Natural killer cell (primary cell): ENCODE measurements at regions of chr3 and their contacts with region 1.

Region 1: GRCh38 chr3:52339612-52340011 is 23.5 kb downstream of the DNAH1 start:
- DNase-seq: peak in 1 of 2 donors; percentile 88
- ATAC-seq: peak; percentile 79 to 82 (median 81)
- H3K4me3 ChIP-seq: no peak overlapping the region
- H3K4me3 Mint-ChIP-seq: no peak overlapping the region
- H3K27ac ChIP-seq: no peak overlapping the region
- H3K27ac Mint-ChIP-seq: peak overlapping the region in 1 of 2 donors; percentile 11
- H3K4me1 ChIP-seq: no peaks in the 10 kb centered on the region
- H3K4me1 Mint-ChIP-seq: peaks cover 7% of the 10 kb centered on the region in 2 donors
- H3K27me3 ChIP-seq: no peaks in the 10 kb centered on the region
- H3K27me3 Mint-ChIP-seq: no peaks in the 10 kb centered on the region
- CTCF ChIP-seq: peak; percentile 84

Region 2: DNA sequence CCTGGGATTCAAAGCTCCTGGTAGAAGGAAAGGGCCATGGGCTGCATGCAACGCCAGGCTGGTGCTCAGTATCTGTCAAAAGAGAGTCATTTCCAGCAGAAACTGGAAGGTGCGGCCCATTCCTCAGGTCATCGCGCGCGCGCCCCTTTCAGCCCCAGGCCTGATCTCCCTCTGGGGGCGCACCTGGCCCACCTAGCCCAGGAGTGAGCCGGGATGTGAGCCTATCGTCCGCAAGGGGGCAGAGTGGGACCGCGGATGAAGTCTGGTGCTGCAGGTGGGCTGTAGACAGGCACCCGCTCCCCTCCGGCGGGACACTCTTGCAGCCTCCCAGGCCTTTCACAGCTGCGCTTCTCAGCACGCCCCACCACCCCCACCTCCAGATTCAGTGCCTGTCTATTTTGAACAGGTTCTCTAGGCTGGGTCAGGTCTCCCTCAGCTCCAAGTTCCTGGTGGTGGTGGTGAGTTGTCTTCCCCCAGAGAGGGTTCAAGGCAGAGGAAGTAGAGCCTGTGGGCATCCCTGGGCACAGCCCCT is 338.1 kb before region 1 on chr3:
- intact Hi-C with region 1: loop called (anchors 5 kb)
- DNase-seq: peak; percentile 85 to 94
- ATAC-seq: peak; percentile 91 to 99 (median 99)
- H3K4me3 ChIP-seq: no peak overlapping the region
- H3K4me3 Mint-ChIP-seq: no peak overlapping the region
- H3K27ac ChIP-seq: no peak overlapping the region
- H3K27ac Mint-ChIP-seq: no peak overlapping the region
- H3K4me1 ChIP-seq: peaks cover 17% of the 10 kb centered on the region
- H3K4me1 Mint-ChIP-seq: peaks cover 0 to 8% of the 10 kb centered on the region in 2 donors
- H3K27me3 ChIP-seq: no peaks in the 10 kb centered on the region
- H3K27me3 Mint-ChIP-seq: peaks cover 0 to 4% of the 10 kb centered on the region in 2 donors
- CTCF ChIP-seq: peak; percentile 93

Region 3: GRCh38 chr3:52220380-52221026 is 119.1 kb before region 1 on chr3:
- intact Hi-C with region 1: loop called (anchors 1 kb)
- DNase-seq: peak; percentile 79 to 93
- ATAC-seq: peak; percentile 83 to 87 (median 84)
- H3K4me3 ChIP-seq: no peak overlapping the region
- H3K4me3 Mint-ChIP-seq: peak overlapping the region; percentile 40
- H3K27ac ChIP-seq: no peak overlapping the region
- H3K27ac Mint-ChIP-seq: peak overlapping the region in 1 of 2 donors; percentile 10
- H3K4me1 ChIP-seq: peaks cover 73% of the 10 kb centered on the region
- H3K4me1 Mint-ChIP-seq: peaks cover 39 to 40% of the 10 kb centered on the region in 2 donors
- H3K27me3 ChIP-seq: no peaks in the 10 kb centered on the region
- H3K27me3 Mint-ChIP-seq: no peaks in the 10 kb centered on the region
- CTCF ChIP-seq: peak; percentile 76

Region 4: DNA sequence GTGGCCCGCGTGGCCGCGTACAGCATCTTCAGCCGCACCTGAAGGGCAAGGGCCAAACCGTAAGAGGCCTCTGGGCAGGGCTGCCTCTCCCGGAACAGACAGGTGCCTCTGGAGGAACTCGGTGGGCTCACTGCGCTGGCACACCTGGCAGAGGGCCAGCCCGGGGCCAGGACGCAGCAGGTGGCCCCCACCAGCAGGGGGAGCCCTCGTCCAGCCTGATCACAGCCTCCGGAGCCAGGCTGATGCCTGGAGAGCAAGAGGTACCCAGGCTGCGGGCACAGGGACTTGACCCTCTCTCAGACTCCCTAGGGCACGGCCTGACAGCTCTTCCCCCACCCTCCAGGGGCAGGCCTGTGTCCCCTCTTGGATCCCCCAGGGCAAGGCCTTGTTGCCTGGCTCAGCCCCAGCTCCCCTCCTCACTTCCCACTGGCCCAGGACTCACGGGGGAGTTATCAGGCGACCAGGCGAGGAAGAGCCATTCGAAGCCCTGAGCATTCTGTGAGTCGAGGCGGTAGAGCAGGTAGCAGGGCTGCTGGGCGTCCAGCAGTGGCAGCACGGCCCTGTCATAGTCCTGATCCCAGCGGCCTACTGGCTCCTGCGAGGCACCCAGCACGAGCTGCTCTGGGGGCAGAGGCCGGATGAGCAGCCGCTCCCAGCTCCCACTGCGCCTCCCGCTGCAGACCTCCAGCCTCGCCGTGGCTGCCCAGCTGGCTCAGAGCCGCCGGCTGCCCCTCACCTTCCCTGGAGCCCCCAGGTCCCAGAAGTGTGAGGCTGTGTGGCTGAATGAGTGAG is 107.9 kb before region 1 on chr3:
- intact Hi-C with region 1: loop called (anchors 1 kb)
- DNase-seq: peak; percentile 87 to 94
- ATAC-seq: peak; percentile 86 to 98 (median 96)
- H3K4me3 ChIP-seq: no peak overlapping the region
- H3K4me3 Mint-ChIP-seq: no peak overlapping the region
- H3K27ac ChIP-seq: no peak overlapping the region
- H3K27ac Mint-ChIP-seq: peak overlapping the region; percentile 64 to 73
- H3K4me1 ChIP-seq: peaks cover 50% of the 10 kb centered on the region
- H3K4me1 Mint-ChIP-seq: peaks cover 16 to 48% of the 10 kb centered on the region in 2 donors
- H3K27me3 ChIP-seq: no peaks in the 10 kb centered on the region
- H3K27me3 Mint-ChIP-seq: no peaks in the 10 kb centered on the region
- CTCF ChIP-seq: peak; percentile 94

Region 5: DNA sequence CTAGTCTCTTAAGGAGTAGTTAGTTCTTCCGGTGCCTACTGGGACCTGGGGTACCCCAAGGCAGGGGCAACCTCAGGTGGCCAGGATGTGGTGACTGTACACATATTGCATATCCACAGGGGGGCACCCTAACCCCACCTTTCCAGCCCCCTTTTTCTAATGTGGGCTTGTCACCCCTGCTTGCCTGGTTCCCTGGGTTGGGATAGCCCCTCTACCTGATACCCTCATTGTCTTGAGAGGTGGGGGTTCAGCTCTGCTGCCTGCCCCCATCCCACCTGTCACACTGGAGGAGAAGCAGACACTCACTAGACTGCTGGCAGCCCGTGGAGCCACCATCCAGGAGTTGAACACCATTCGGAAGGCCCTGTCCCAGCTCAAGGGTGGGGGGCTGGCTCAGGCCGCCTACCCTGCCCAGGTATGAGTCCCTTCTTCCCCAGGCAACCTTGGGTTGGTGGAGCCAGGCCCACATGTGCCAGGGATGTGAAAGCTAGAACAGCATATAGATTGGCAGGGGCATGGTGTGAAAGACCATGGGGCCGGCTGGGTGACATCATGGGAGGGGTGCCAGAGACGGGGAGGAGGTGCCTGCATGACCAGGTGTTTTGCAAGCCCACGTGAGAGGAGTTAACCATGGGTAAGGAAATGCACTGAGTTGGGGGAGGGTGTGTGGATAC is 48.0 kb before region 1 on chr3:
- intact Hi-C with region 1: loop called (anchors 1 kb)
- DNase-seq: peak; percentile 40 to 67
- ATAC-seq: no peak
- H3K4me3 ChIP-seq: no peak overlapping the region
- H3K4me3 Mint-ChIP-seq: peak overlapping the region; percentile 45
- H3K27ac ChIP-seq: no peak overlapping the region
- H3K27ac Mint-ChIP-seq: peak overlapping the region; percentile 59 to 65
- H3K4me1 ChIP-seq: peaks cover 41% of the 10 kb centered on the region
- H3K4me1 Mint-ChIP-seq: peaks cover 29 to 50% of the 10 kb centered on the region in 2 donors
- H3K27me3 ChIP-seq: no peaks in the 10 kb centered on the region
- H3K27me3 Mint-ChIP-seq: no peaks in the 10 kb centered on the region
- CTCF ChIP-seq: peak; percentile 56